ENCODE measurements at regions of chr11 and their contacts with region 1.

Region 1: GRCh38 chr11:447923-448731 is 2.0 kb upstream of the PTDSS2 start:
- DNase-seq: peak; percentile 87 to 94 (median 94)
- H3K4me3 ChIP-seq: peak overlapping the region; percentile 51 to 90 (median 71)
- H3K27ac ChIP-seq: peak overlapping the region; percentile 46 to 75
- H3K4me1 ChIP-seq: peaks cover 0 to 30% (median 29%) of the 10 kb centered on the region in 4 experiments
- H3K27me3 ChIP-seq: peaks cover 0 to 2% (median 0%) of the 10 kb centered on the region in 5 experiments

Region 2: GRCh38 chr11:363948-364761 is 84.0 kb before region 1 on chr11:
- CTCF ChIA-PET with region 1: interaction called, 37 read pairs
- POLR2A ChIA-PET with region 1: interaction called, 4 read pairs
- DNase-seq: peak; percentile 43 to 66 (median 61)
- H3K4me3 ChIP-seq: no peak overlapping the region
- H3K27ac ChIP-seq: no peak overlapping the region
- H3K4me1 ChIP-seq: peaks cover 0 to 9% (median 6%) of the 10 kb centered on the region in 4 experiments
- H3K27me3 ChIP-seq: peaks cover 0 to 38% (median 20%) of the 10 kb centered on the region in 5 experiments

Region 3: GRCh38 chr11:396948-397548 is 51.1 kb before region 1 on chr11:
- CTCF ChIA-PET with region 1: interaction called, 14 read pairs
- POLR2A ChIA-PET with region 1: interaction called, 3 read pairs
- DNase-seq: peak; percentile 59 to 78 (median 65)
- H3K4me3 ChIP-seq: peak overlapping the region; percentile 24 to 72 (median 51)
- H3K27ac ChIP-seq: no peak overlapping the region
- H3K4me1 ChIP-seq: peaks cover 0 to 17% (median 13%) of the 10 kb centered on the region in 4 experiments
- H3K27me3 ChIP-seq: peaks cover 0 to 10% (median 0%) of the 10 kb centered on the region in 5 experiments

Region 4: GRCh38 chr11:406978-407739 is 41.0 kb before region 1 on chr11:
- CTCF ChIA-PET with region 1: interaction called, 46 read pairs
- POLR2A ChIA-PET with region 1: interaction called, 7 read pairs
- DNase-seq: peak; percentile 93 to 98 (median 98)
- H3K4me3 ChIP-seq: peak overlapping the region in 5 of 7 experiments; percentile 19 to 59 (median 46)
- H3K27ac ChIP-seq: no peak overlapping the region
- H3K4me1 ChIP-seq: peaks cover 0 to 20% (median 14%) of the 10 kb centered on the region in 4 experiments
- H3K27me3 ChIP-seq: peaks cover 0 to 11% (median 0%) of the 10 kb centered on the region in 5 experiments

Region 5: GRCh38 chr11:416757-417621 is 31.1 kb before region 1 on chr11:
- CTCF ChIA-PET with region 1: interaction called, 19 read pairs
- POLR2A ChIA-PET with region 1: interaction called, 8 read pairs
- DNase-seq: peak in 1 of 3 donors; percentile 41
- H3K4me3 ChIP-seq: peak overlapping the region; percentile 64 to 91 (median 75)
- H3K27ac ChIP-seq: no peak overlapping the region
- H3K4me1 ChIP-seq: peaks cover 5 to 50% (median 49%) of the 10 kb centered on the region in 4 experiments
- H3K27me3 ChIP-seq: no peaks in the 10 kb centered on the region

Measured in common myeloid progenitor, CD34-positive (primary cell).